ENCODE measurements at regions of chr13 and their contacts with region 1.

Region 1: DNA sequence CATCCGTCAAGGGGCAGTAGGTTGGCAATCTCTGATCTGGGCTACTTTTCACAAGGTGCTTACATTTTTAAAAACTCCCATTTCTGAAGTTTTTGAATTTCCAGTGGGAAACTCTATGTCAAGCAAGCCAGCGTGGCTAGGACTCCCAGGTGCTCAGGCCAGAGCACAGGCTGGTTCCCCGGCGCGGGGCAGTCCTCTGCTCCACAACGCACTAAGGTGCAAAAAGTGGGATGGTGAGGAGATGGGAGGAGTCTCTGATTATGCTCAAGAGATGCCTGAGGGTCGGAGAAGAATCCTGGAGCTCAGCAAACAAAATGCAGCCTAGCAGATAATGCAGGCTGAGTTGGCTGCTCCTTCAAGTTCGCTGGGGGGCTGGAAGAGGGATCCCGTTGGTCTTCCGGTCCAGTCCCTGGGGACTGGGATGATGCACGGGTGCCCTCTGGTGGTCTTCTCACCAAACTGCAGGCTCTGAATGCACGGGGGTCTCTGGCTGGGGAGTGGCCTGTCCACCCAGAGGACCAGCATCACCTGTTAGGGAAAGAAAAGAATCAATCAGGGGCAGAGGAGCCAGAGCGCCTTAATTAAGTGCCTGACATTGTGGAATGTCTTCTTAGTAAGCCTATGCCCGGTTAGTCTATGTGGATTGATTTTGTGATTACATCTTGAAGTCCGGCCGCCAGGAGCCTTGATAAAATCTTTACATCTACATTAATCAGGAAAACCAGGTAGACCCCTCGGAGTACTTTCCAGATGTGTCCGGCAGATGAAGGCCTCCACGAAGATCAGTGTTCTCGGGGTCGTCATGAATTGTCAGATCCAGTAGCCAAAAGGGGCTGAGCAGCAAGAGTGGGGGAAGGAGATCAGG is 244.4 kb upstream of the MAB21L1 start:
- DNase-seq: peak; percentile 47
- H3K4me3 ChIP-seq: no peak overlapping the region
- H3K27ac ChIP-seq: no peak overlapping the region
- H3K4me1 ChIP-seq: peaks cover 10% of the 10 kb centered on the region
- H3K27me3 ChIP-seq: peaks cover 0 to 3% of the 10 kb centered on the region in 2 experiments
- CTCF ChIP-seq: peak; percentile 92 to 96
- POLR2A ChIP-seq: no peak

Region 2: GRCh38 chr13:33846444-33847062 is 1874.4 kb before region 1 on chr13:
- CTCF ChIA-PET with region 1: no interaction called
- POLR2A ChIA-PET with region 1: no interaction called
- dilution Hi-C with region 1: no loop called
- intact Hi-C with region 1: no loop called
- DNase-seq: no peak
- H3K4me3 ChIP-seq: no peak overlapping the region
- H3K27ac ChIP-seq: no peak overlapping the region
- H3K4me1 ChIP-seq: no peaks in the 10 kb centered on the region
- H3K27me3 ChIP-seq: no peaks in the 10 kb centered on the region
- CTCF ChIP-seq: no peak
- POLR2A ChIP-seq: no peak

Region 3: GRCh38 chr13:33874873-33875272 is 1846.0 kb before region 1 on chr13:
- CTCF ChIA-PET with region 1: no interaction called
- POLR2A ChIA-PET with region 1: no interaction called
- dilution Hi-C with region 1: no loop called
- intact Hi-C with region 1: loop called (anchors 5 kb)
- DNase-seq: peak; percentile 17
- H3K4me3 ChIP-seq: no peak overlapping the region
- H3K27ac ChIP-seq: no peak overlapping the region
- H3K4me1 ChIP-seq: peaks cover 17% of the 10 kb centered on the region
- H3K27me3 ChIP-seq: no peaks in the 10 kb centered on the region
- CTCF ChIP-seq: peak in 1 of 2 donors; percentile 9
- POLR2A ChIP-seq: no peak

Region 4: DNA sequence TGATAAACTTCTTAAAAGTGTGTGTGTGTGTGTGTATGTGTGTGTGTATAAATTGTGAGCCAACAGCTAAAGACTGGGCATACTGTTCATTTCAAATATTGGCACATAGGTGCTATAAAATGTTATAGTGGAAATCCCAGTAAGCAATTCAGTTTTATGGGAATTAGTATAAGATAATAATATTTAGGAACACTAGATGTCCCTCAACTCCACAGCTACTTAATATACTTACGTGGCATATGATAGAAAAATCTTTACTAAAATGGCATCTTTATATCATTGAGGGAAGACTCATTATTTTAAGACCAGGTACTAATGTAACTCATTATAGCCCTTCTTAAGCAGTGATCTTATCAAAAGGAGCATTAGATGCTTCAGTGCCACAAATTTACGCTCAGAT is 510.7 kb before region 1 on chr13:
- CTCF ChIA-PET with region 1: interaction called, 11 read pairs
- POLR2A ChIA-PET with region 1: no interaction called
- dilution Hi-C with region 1: no loop called
- intact Hi-C with region 1: loop called (anchors 1 kb)
- DNase-seq: peak; percentile 34
- H3K4me3 ChIP-seq: no peak overlapping the region
- H3K27ac ChIP-seq: no peak overlapping the region
- H3K4me1 ChIP-seq: no peaks in the 10 kb centered on the region
- H3K27me3 ChIP-seq: no peaks in the 10 kb centered on the region
- CTCF ChIP-seq: no peak
- POLR2A ChIP-seq: no peak

Region 5: GRCh38 chr13:35630551-35631275 is 90.2 kb before region 1 on chr13:
- CTCF ChIA-PET with region 1: interaction called, 3 read pairs
- POLR2A ChIA-PET with region 1: no interaction called
- dilution Hi-C with region 1: no loop called
- intact Hi-C with region 1: loop called (anchors 1 kb)
- DNase-seq: peak; percentile 13
- H3K4me3 ChIP-seq: no peak overlapping the region
- H3K27ac ChIP-seq: no peak overlapping the region
- H3K4me1 ChIP-seq: peaks cover 11% of the 10 kb centered on the region
- H3K27me3 ChIP-seq: no peaks in the 10 kb centered on the region
- CTCF ChIP-seq: peak; percentile 66 to 73
- POLR2A ChIP-seq: no peak

Region 6: DNA sequence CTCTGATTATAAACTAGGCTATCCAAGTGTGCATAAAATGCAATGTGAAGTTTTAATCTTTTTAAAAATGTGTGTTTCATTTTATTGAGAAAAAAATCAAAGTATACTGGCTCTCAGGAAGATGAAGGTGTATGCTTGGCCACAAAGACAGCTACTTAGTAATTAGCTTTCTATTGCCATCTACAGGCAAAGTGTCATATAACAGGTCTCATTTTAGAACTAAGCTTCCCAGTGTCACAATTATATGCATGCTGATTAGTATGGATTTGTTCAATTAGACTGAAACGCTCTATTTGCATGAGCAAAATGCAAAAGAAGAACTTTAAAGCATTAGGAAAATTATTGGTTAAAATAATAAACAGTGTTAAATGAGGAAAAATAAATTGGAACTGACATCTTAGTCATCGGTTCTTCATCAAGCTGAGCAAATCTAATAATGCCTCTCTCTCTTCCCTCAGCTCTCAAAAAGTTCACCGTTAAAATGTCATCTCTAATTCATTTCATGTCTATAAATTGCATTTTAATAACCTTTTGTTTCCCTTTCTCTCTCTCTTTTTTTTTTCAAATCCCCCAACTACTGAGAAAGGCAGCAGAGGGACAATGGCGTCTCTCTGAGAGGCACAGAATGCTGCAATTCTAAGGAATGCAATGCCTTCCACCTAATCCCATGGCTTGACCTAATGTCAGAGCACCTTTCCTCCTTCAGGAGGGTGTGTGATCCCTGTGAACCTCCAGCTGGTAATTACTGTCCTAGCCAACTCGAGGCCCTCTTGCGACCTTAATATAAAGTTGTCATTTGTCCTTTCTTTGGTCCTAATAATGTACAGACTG is 68.6 kb after region 1 on chr13:
- CTCF ChIA-PET with region 1: interaction called, 27 read pairs
- POLR2A ChIA-PET with region 1: no interaction called
- dilution Hi-C with region 1: no loop called
- intact Hi-C with region 1: no loop called
- DNase-seq: peak; percentile 48
- H3K4me3 ChIP-seq: no peak overlapping the region
- H3K27ac ChIP-seq: no peak overlapping the region
- H3K4me1 ChIP-seq: no peaks in the 10 kb centered on the region
- H3K27me3 ChIP-seq: no peaks in the 10 kb centered on the region
- CTCF ChIP-seq: peak; percentile 34 to 45
- POLR2A ChIP-seq: no peak

Measured in endothelial cell of umbilical vein (primary cell).